Left cardiac atrium (tissue), 4 donors: ENCODE measurements at regions of chr14 and their contacts with region 1.

Region 1: GRCh38 chr14:56339855-56340701 is 221.9 kb downstream of the PELI2 start:
- DNase-seq: peak; percentile 79
- ATAC-seq: peak; percentile 93 to 94

Region 2: DNA sequence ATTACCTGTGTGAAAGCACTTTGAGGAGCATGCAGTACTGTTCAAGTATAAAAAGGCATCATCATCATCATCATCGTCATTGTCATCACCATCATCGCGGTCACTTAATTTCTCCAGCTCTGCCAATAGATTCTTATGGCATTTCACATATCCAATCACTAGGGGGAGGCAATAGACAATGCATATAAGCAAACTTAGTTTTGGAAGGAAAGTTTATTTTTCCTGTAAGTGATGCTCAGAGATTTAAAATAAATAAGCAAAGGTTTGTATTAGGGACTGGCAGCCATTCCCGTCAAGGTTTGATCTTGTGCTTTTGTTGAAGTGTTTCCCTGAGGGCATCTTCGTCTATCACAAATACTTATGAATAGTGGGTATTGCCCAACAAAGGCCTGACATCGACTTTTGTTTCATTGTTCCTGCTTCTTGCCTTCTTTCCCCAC is 632.7 kb before region 1 on chr14:
- intact Hi-C with region 1: loop called (anchors 5 kb)
- DNase-seq: no peak
- ATAC-seq: peak in 1 of 2 donors; percentile 34

Region 3: GRCh38 chr14:55731881-55732498 is 608.1 kb before region 1 on chr14:
- intact Hi-C with region 1: loop called (anchors 5 to 10 kb)
- DNase-seq: no peak
- ATAC-seq: peak in 1 of 2 donors; percentile 18

Region 4: DNA sequence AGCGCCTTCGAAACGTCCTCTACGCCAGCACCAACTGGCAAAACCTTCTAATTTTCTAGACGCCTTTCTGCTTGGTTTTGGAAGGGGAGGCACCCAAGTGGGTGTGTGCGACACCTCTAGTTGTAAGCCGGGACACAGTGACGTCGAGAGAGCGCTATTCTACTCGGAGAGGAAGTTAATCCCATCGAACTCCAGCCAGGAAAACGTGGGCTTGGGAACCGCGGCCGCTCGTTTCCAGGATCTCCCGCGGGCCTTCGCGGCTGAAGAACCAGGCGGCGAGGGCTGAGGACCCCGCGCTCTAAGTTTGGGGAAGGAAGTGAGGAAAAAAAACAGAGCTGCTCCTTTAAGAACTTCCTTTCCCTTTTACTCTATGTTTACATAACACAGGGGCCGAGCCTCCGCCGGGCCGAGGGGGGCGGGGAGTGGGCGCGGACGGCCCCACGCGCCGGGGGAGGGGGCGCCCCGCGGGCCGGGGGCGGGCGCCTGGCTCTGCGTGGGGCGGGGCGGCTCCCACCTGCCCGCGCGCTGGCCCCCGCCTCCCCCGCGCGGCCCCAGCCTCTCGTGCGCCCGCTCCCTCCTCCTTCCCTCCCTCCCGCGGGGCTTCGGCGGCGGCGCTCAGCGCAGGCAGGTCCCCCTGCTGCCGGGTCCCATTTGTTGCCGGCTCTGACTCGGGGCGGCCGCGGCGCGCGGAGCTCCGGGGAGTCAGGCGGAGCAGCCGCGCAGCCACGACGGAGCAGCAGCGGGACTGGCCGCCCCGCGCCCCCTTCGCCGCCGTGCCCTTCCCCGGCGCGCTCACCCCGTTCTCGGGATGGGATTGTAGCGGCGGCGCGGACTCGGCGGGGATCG is 222.1 kb before region 1 on chr14 and contains the start of gene PELI2:
- intact Hi-C with region 1: loop called (anchors 10 kb)
- DNase-seq: peak; percentile 83
- ATAC-seq: peak; percentile 81 to 87
- total RNA-seq, gene PELI2: 3.0 to 3.7 TPM

Region 5: DNA sequence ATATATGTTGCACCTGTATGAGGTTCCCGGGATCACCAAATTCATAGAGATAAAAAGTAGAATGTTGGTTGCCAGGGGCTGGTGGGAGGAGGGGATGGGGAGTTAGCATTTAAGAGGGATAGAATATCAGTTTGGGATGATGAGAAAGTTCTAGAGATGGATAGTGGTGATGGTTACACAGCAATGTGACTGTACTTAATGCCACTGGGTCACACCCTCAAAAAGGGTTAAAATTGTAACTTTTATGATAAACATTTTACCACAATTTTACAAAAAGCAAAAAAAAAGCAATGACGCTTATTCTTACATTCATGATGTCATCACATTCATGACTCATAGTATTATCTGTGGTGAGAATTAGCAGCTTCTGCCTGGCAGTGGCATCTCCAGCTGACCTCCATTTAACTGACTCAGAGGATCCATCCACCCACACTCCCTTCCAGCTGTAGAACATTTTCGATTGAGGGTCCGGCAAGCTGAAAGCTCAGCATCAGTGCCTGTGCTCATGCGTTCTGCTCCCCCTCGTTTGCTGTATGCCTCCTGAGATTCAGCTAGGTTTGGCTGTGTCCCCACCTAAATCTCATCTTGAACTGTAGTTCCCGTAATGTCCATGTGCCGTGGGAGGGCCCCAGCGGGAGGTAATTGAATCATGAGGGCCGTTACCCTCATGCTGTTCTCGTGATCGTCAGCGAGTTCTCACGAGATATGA is 174.7 kb after region 1 on chr14:
- intact Hi-C with region 1: no loop called
- DNase-seq: no peak
- ATAC-seq: peak in 1 of 2 donors; percentile 29